Panc1 (cell line): ENCODE measurements at regions of chr18 and their contacts with region 1.

Region 1: DNA sequence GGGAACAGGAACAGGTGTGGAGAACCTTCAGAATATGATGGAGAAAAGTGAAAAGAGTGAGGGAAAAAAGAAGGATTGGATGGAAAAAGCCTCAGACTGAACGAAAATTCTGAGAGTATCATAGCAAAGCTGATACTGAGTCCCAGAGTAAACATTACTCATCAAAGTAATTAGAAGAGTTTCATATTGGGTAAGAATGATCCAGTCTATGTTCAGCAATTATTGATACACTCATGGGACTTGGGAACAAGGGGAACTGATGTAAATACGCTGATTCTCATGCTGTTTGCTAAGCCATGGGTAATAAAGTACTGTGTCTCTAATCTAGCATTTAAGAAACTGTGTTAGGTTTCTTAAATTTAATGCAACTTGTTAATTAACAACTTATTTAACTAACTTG is 219.9 kb upstream of the NOL4 start:
- DNase-seq: no peak
- ATAC-seq: no peak
- H3K4me3 ChIP-seq: no peak overlapping the region
- H3K27ac ChIP-seq: no peak overlapping the region
- H3K4me1 ChIP-seq: no peaks in the 10 kb centered on the region
- H3K27me3 ChIP-seq: no peaks in the 10 kb centered on the region
- CTCF ChIP-seq: no peak

Region 2: GRCh38 chr18:34281722-34282121 is 162.9 kb before region 1 on chr18:
- CTCF ChIA-PET with region 1: no interaction called
- POLR2A ChIA-PET with region 1: no interaction called
- in situ Hi-C with region 1: no loop called
- intact Hi-C with region 1: no loop called
- DNase-seq: no peak
- ATAC-seq: no peak
- H3K4me3 ChIP-seq: no peak overlapping the region
- H3K27ac ChIP-seq: no peak overlapping the region
- H3K4me1 ChIP-seq: no peaks in the 10 kb centered on the region
- H3K27me3 ChIP-seq: no peaks in the 10 kb centered on the region
- CTCF ChIP-seq: no peak

Region 3: DNA sequence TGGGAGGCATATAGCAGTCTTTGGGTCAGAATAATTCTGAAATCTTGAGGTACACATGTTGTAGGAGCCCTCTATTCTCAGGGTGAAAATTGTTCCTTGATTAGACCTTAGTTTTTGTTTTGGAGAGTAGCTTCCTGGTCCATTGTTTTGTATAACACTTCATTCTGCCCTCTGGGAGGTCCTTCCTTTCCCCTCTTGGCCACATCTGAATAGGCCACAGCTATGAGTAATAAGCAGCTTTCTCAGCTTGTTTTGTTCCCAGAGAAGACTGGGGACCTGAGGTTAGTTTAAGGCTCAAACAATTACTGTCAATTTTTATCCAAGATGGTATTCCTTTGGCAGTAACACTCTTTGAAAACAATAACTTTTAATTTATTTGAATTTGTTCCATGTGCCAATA is 147.3 kb before region 1 on chr18:
- CTCF ChIA-PET with region 1: no interaction called
- POLR2A ChIA-PET with region 1: no interaction called
- in situ Hi-C with region 1: no loop called
- intact Hi-C with region 1: loop called (anchors 5 kb)
- DNase-seq: no peak
- ATAC-seq: no peak
- H3K4me3 ChIP-seq: no peak overlapping the region
- H3K27ac ChIP-seq: no peak overlapping the region
- H3K4me1 ChIP-seq: no peaks in the 10 kb centered on the region
- H3K27me3 ChIP-seq: no peaks in the 10 kb centered on the region
- CTCF ChIP-seq: no peak

Region 4: GRCh38 chr18:34467058-34467457 is 22.4 kb after region 1 on chr18:
- CTCF ChIA-PET with region 1: no interaction called
- POLR2A ChIA-PET with region 1: no interaction called
- in situ Hi-C with region 1: no loop called
- intact Hi-C with region 1: no loop called
- DNase-seq: no peak
- ATAC-seq: no peak
- H3K4me3 ChIP-seq: no peak overlapping the region
- H3K27ac ChIP-seq: no peak overlapping the region
- H3K4me1 ChIP-seq: no peaks in the 10 kb centered on the region
- H3K27me3 ChIP-seq: no peaks in the 10 kb centered on the region
- CTCF ChIP-seq: no peak

Region 5: DNA sequence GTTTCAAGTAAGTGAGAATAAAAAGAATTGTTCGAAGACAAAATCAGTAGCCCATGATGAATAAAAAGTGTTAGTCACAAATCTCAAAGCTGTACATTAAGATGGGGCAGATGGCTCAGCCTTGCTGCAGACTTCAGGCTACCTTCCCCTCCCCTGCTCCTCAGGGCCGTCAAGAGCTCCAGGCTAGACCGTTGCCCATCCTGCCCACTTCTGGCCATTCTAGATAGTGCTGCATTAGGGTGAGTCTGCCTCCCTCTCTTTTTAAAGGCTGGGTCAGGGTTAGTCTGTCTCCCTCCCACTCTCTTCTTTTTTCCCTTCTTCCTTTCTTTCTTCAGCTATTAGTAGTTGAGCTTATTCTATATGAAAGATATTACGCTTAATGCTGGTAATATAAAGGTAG is 682.6 kb after region 1 on chr18:
- CTCF ChIA-PET with region 1: no interaction called
- POLR2A ChIA-PET with region 1: interaction called, 11 read pairs
- in situ Hi-C with region 1: no loop called
- intact Hi-C with region 1: no loop called
- DNase-seq: no peak
- ATAC-seq: no peak
- H3K4me3 ChIP-seq: no peak overlapping the region
- H3K27ac ChIP-seq: no peak overlapping the region
- H3K4me1 ChIP-seq: no peaks in the 10 kb centered on the region
- H3K27me3 ChIP-seq: no peaks in the 10 kb centered on the region
- CTCF ChIP-seq: no peak